GM12878 (cell line): ENCODE measurements at regions of chr5 and their contacts with region 1.

Region 1: DNA sequence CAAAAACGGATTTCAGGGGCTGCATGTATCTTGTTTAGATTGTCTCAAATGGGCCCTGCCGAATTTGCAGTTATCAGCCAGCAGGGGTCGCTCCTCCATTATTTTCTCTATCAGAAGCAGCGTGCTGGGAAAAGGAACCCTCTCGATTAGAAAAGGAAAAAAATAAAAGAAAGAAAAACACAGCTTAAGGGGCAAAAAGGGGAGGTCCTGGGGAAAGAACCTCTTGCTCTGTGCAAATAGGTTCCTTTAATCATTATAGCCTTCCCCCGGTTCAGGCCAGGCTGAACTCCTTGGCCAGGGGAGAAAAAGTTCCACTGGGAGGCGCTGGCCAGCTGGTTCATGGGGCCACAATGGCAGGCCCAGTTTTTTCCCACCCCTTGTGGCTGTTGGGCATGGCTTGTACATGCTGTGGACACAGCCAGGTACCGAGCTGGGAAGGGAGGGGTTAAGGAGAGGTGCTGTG is 25.0 kb upstream of the CAPSL start:
- DNase-seq: no peak
- ATAC-seq: peak; percentile 54; the same call in 2 of the 3 replicates
- H3K4me3 ChIP-seq: no peak overlapping the region
- H3K27ac ChIP-seq: no peak overlapping the region
- H3K4me1 ChIP-seq: no peaks in the 10 kb centered on the region
- H3K27me3 ChIP-seq: no peaks in the 10 kb centered on the region
- CTCF ChIP-seq: peak; percentile 23 to 52 (median 43); a peak in 5 of 6 replicates
- EP300 ChIP-seq: no peak
- POLR2A ChIP-seq: no peak
- RAD21 ChIP-seq: no peak

Region 2: GRCh38 chr5:35979715-35980114 is 16.3 kb after region 1 on chr5:
- CTCF ChIA-PET with region 1: no interaction called
- POLR2A ChIA-PET with region 1: no interaction called
- RAD21 ChIA-PET with region 1: no interaction called
- SMC1A ChIA-PET with region 1: no interaction called
- in situ Hi-C with region 1: no loop called
- intact Hi-C with region 1: no loop called
- DNase-seq: no peak
- ATAC-seq: no peak
- H3K4me3 ChIP-seq: no peak overlapping the region
- H3K27ac ChIP-seq: no peak overlapping the region
- H3K4me1 ChIP-seq: no peaks in the 10 kb centered on the region
- H3K27me3 ChIP-seq: no peaks in the 10 kb centered on the region
- CTCF ChIP-seq: no peak
- EP300 ChIP-seq: no peak
- POLR2A ChIP-seq: no peak
- RAD21 ChIP-seq: no peak

Region 3: GRCh38 chr5:35990941-35991611 is 27.7 kb after region 1 on chr5 and contains the start of gene UGT3A1:
- CTCF ChIA-PET with region 1: no interaction called
- POLR2A ChIA-PET with region 1: no interaction called
- RAD21 ChIA-PET with region 1: no interaction called
- SMC1A ChIA-PET with region 1: no interaction called
- in situ Hi-C with region 1: no loop called
- intact Hi-C with region 1: no loop called
- DNase-seq: no peak
- ATAC-seq: no peak
- H3K4me3 ChIP-seq: no peak within 1 kb of the TSS
- H3K27ac ChIP-seq: no peak within 1 kb of the TSS
- H3K4me1 ChIP-seq: no peaks in the 10 kb centered on the region
- H3K27me3 ChIP-seq: no peaks in the 10 kb centered on the region; a peak in 1 of 4 replicates
- CTCF ChIP-seq: no peak
- EP300 ChIP-seq: no peak
- POLR2A ChIP-seq: no peak
- RAD21 ChIP-seq: no peak
- polyA plus RNA-seq, gene UGT3A1: not detected

Region 4: DNA sequence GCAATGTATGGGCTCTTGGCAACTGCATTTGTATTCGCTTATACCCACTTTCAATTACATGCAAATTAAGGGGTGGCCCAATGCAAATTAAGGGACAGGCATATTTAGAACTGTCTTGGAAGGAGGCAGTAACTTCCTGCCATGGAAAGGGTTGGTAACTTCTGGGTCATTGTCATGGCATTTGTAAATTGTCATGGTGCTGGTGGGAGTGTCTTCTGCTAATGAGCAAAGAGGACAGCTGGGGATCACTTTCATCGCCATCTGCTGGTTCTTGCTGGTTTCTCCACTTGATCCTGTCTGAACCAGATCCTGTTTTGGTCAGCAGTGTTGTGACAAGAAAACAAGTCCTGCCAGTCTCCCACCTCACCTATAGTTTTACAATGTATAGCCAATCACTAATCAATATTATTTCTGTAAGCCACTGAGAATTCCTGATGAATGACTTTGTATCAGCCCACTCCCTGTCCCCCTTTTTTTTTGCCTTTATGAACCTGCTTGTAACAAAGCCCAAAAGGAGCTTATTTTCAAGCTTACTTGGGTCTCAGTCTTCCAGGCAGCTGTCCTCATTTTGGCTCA is 126.7 kb after region 1 on chr5:
- CTCF ChIA-PET with region 1: no interaction called
- POLR2A ChIA-PET with region 1: no interaction called
- RAD21 ChIA-PET with region 1: no interaction called
- SMC1A ChIA-PET with region 1: no interaction called
- in situ Hi-C with region 1: no loop called
- intact Hi-C with region 1: loop called (anchors 2 kb)
- DNase-seq: no peak
- ATAC-seq: peak; percentile 89
- H3K4me3 ChIP-seq: no peak overlapping the region
- H3K27ac ChIP-seq: no peak overlapping the region
- H3K4me1 ChIP-seq: no peaks in the 10 kb centered on the region
- H3K27me3 ChIP-seq: no peaks in the 10 kb centered on the region
- CTCF ChIP-seq: peak; percentile 28 to 44 (median 28); a peak in 5 of 6 replicates
- EP300 ChIP-seq: no peak
- POLR2A ChIP-seq: no peak
- RAD21 ChIP-seq: no peak

Region 5: GRCh38 chr5:36305571-36306326 is 342.3 kb after region 1 on chr5:
- CTCF ChIA-PET with region 1: no interaction called
- POLR2A ChIA-PET with region 1: no interaction called
- RAD21 ChIA-PET with region 1: no interaction called
- SMC1A ChIA-PET with region 1: no interaction called
- in situ Hi-C with region 1: no loop called
- intact Hi-C with region 1: loop called (anchors 1 kb)
- DNase-seq: no peak
- ATAC-seq: peak; percentile 89
- H3K4me3 ChIP-seq: no peak overlapping the region
- H3K27ac ChIP-seq: no peak overlapping the region
- H3K4me1 ChIP-seq: no peaks in the 10 kb centered on the region
- H3K27me3 ChIP-seq: peaks cover 0 to 3% of the 10 kb centered on the region in 2 experiments; a peak in 1 of 4 replicates
- CTCF ChIP-seq: peak; percentile 61 to 83 (median 74)
- EP300 ChIP-seq: no peak
- POLR2A ChIP-seq: no peak
- RAD21 ChIP-seq: peak; percentile 82